Dorsolateral prefrontal cortex (tissue), 120 donors: ENCODE measurements at regions of chr1 and their contacts with region 1.

Region 1: GRCh38 chr1:196660852-196661251 is 9.0 kb downstream of the CFH start:
- DNase-seq: peak in 1 of 10 donors; percentile 22
- H3K4me3 ChIP-seq: peak overlapping the region in 25 of 59 donors; percentile 0 to 44 (median 30)
- H3K27ac ChIP-seq: peak overlapping the region in 1 of 59 donors; percentile 10
- H3K27me3 ChIP-seq: peaks cover 0 to 5% (median 0%) of the 10 kb centered on the region in 45 donors
- CTCF ChIP-seq: peak; percentile 53 to 89 (median 74)

Region 2: DNA sequence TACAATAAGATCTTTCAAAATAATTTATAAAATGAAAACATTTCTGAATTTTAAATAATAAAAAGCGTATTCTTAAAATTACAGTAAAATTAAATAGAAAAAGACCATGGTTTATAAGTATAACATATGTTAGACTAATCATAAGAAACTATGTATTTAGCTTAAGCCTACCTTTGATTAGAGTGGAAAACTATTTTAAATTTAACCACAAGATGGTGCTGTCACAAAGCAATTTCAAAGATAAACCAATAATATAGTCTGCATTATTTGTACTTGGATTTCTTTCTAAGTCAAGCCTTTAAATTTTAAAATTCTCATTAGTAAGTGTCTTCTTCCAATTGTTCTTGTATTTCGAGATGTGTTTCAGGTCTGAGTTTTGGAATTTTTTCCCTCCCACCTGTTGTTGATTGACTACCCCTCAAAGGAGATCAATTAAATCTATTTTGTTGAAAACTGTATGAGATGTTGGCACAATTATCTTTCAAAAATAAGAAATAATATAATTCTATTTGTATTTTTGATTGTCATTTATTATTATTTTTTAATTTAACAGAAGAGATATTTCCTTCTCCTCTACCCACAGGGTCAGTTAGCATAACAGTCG is 512.4 kb before region 1 on chr1:
- intact Hi-C with region 1: loop called (anchors 5 to 10 kb)
- DNase-seq: no peak
- H3K4me3 ChIP-seq: no peak overlapping the region
- H3K27ac ChIP-seq: no peak overlapping the region
- H3K27me3 ChIP-seq: no peaks in the 10 kb centered on the region
- CTCF ChIP-seq: peak; percentile 51 to 83 (median 70)

Region 3: GRCh38 chr1:196317535-196318522 is 343.0 kb before region 1 on chr1:
- intact Hi-C with region 1: loop called (anchors 5 to 10 kb)
- DNase-seq: peak in 6 of 10 donors; percentile 31 to 47 (median 43)
- H3K4me3 ChIP-seq: no peak overlapping the region
- H3K27ac ChIP-seq: no peak overlapping the region
- H3K27me3 ChIP-seq: no peaks in the 10 kb centered on the region
- CTCF ChIP-seq: peak in 55 of 56 donors; percentile 26 to 80 (median 60)

Region 4: DNA sequence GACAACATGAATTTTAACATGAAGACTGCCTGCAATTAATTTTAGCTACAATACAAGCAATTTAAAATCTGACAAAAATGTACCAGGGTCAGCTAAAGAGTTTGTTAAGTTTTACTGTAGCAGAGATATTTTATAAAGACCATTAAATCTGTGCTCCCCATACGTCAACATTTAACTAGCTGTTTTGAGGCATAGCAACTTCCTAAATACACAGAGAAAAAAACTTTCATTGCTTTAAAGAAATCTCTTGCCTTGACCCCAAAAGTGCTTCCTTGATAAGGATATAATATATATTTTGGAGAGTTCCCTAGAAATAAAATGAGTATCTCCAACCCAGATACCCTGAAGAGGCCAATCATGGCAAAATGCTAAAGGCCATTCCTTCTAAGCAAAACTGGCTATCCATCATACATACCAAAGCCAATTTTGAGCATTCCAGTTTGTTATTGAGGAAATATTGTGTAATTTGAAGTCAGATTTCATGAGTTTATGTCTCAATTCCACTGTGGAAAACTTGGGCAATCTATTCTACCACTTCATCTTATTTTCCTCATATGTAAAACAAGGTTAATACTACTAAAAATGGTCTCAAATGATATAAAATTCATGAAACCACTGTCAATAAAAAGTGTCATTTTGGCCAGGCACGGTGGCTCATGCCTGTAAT is 466.5 kb after region 1 on chr1:
- intact Hi-C with region 1: no loop called
- DNase-seq: no peak
- H3K4me3 ChIP-seq: no peak overlapping the region
- H3K27ac ChIP-seq: no peak overlapping the region
- H3K27me3 ChIP-seq: no peaks in the 10 kb centered on the region
- CTCF ChIP-seq: no peak